ENCODE measurements at regions of chr9 and their contacts with region 1.

Region 1: DNA sequence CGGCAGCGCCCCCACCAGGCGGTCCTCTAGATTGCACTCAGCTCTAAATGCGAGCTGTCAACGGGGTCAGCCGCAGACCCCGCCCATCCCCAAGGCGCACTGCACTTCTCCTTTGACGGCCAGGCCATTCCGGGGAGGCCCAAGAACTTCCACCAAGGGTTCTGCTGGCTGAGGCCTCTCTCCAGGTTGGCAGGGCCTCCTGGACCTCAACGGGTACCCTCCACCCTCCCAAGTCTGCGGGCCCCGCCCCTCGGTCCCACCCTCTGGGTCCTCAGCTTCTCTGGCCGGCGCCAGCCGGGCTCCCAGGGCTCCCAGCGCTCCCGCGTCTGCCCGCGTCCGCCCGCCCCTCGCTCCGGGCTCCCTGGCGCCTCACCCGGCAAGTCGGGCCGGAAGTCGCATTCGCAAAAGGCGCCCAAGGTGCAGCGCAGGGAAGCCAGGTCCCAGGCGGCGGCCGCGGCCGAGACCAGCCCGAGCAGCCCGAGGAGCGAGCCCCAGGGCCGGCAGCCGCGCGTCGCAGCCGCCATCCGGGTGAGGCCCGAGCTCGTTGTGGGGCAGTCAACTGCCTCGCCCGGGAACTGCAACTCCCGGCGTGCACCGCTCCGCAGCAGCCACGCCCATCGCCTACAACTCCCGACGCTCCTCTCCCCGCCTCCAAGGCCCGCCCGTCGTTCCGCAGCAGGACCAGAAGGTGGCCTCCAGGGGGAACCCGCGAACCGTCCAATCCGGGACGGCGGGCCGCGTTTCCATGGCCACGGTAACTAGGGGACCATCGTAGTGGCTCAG is at the start of gene TOR2A:
- DNase-seq: peak; percentile 98
- H3K4me3 Mint-ChIP-seq: peak within 1 kb of the TSS; percentile 79
- H3K27ac Mint-ChIP-seq: peak within 1 kb of the TSS; percentile 82
- H3K4me1 Mint-ChIP-seq: peaks cover 23% of the 10 kb centered on the region
- H3K27me3 Mint-ChIP-seq: no peaks in the 10 kb centered on the region
- total RNA-seq, gene TOR2A: 20.6 to 23.3 TPM

Region 2: DNA sequence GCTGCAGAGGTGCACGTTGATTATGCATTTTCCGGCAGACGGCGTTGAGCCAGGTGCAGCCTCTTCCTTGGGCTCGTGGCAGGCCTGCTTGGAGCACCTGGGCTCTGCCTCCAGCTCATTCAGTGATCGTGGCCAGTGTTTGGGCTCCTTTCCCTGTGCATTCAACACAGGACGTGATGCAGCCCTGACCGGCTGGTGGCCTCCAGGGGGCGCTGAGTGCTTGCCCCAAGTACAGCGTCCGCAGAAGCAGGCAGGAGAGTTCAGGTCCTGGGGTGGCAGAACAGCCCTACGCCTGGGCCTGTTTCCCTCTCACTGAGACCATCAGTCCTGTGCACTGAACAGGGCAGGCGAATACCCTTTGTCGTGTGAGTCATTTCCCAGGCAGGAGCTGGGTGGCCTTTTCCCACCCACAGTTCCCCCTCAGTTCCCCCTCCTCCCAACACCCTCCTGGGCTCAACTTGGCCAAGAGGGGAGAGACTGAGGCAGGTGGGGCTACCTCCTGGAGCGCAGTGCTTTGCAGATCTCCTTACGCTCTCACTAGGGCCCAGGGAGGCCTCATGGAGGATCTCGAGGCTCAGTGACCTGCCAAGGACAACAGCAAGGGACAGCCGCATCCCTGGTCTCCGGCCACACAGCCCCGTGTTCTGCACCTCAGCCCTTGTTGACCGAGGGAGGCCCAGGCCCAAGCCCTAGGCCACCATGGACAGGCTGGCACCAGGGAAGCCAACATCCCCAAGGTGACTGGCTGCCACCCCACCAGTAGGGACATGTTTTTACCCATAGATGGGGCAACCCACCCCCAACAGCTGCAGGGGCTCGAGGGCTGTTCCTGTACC is 230.8 kb before region 1 on chr9:
- CTCF ChIA-PET with region 1: interaction called, 19 read pairs
- POLR2A ChIA-PET with region 1: interaction called, 6 read pairs
- DNase-seq: peak; percentile 85
- H3K4me3 Mint-ChIP-seq: no peak overlapping the region
- H3K27ac Mint-ChIP-seq: peak overlapping the region; percentile 68
- H3K4me1 Mint-ChIP-seq: no peaks in the 10 kb centered on the region
- H3K27me3 Mint-ChIP-seq: no peaks in the 10 kb centered on the region

Region 3: GRCh38 chr9:127611899-127612790 is 122.8 kb before region 1 on chr9 and contains the start of gene STXBP1:
- CTCF ChIA-PET with region 1: interaction called, 18 read pairs
- POLR2A ChIA-PET with region 1: interaction called, 4 read pairs
- DNase-seq: peak; percentile 89
- H3K4me3 Mint-ChIP-seq: peak within 1 kb of the TSS; percentile 84
- H3K27ac Mint-ChIP-seq: no peak within 1 kb of the TSS
- H3K4me1 Mint-ChIP-seq: peaks cover 37% of the 10 kb centered on the region
- H3K27me3 Mint-ChIP-seq: peaks cover 38% of the 10 kb centered on the region
- total RNA-seq, gene STXBP1: 23.2 to 23.4 TPM

Region 4: DNA sequence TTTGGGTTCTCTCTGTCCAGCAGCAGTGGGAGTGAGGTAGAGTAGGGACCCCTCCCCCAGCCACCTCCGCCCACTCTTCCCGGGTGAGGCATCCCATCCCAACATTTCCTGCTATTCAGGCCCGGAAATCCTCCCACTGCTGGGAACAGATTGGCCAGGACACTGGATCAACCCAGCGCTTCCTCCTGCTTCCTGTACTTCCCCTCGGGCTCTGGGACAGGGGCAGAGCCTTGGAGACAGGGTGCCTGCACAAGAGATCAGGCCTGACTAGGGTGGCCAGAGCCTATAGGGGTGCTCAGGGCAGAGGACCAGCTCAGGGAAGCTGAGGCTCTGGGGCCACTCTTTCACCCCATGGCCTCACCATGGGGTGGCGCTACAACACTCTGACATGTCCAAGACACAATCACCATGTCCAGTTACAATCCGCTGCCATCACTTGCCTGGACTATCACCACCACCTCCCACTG is 29.0 kb after region 1 on chr9:
- CTCF ChIA-PET with region 1: interaction called, 11 read pairs
- POLR2A ChIA-PET with region 1: interaction called, 6 read pairs
- DNase-seq: no peak
- H3K4me3 Mint-ChIP-seq: no peak overlapping the region
- H3K27ac Mint-ChIP-seq: peak overlapping the region; percentile 28
- H3K4me1 Mint-ChIP-seq: peaks cover 58% of the 10 kb centered on the region
- H3K27me3 Mint-ChIP-seq: no peaks in the 10 kb centered on the region

Region 5: GRCh38 chr9:127802576-127803443 is 67.9 kb after region 1 on chr9 and contains the start of gene FPGS:
- CTCF ChIA-PET with region 1: interaction called, 10 read pairs
- POLR2A ChIA-PET with region 1: interaction called, 5 read pairs
- DNase-seq: peak; percentile 85
- H3K4me3 Mint-ChIP-seq: peak within 1 kb of the TSS; percentile 93
- H3K27ac Mint-ChIP-seq: peak within 1 kb of the TSS; percentile 92
- H3K4me1 Mint-ChIP-seq: peaks cover 32% of the 10 kb centered on the region
- H3K27me3 Mint-ChIP-seq: no peaks in the 10 kb centered on the region
- total RNA-seq, gene FPGS: 65.6 to 65.8 TPM

Region 6: DNA sequence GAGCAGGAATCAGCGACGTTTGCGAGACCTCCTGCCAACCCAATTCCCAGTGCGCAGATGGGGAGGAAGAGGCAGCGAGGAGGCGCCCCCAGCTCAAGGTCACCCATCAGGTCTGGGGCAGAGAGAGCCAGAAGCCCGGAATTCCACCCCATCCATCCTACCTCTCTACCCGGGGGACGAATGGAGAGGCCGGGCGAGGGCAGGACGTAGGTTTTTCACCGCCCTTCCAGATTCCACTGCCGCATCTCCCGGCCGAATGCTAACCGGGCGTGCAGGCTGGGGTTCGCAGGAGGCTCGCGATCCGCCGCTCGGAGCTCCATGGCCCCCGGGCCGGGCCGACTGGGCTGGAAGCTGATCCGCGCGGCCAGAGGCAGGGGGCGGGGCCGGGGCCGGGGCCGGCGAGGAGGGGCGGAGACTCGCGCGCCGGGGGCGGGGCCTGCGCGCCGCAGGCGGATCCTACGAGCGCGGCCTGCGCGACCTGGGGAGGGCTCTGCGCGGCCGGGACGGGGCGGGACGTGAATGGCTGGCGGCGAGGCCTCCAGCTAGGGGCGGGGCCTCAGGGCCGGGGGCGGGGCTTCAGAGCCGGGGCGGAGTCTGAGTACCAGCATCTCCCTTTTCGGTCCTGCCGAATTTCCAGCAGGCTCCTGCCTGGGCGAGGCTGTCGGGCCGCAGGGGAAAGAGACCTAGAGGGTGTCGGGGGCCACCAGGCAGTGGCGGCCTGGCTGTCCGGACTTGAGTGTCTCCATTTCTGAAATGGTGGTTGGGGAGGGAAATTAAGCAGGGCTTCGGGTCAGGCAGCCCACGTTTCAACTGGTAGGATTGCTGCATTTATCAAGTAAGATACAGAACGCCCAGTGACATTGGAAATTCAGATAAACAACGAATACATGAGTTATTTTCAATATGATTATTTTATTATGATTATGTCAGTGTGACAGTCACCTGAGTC is 182.0 kb after region 1 on chr9 and contains the start of gene ST6GALNAC4:
- CTCF ChIA-PET with region 1: interaction called, 48 read pairs
- POLR2A ChIA-PET with region 1: interaction called, 12 read pairs
- DNase-seq: peak; percentile 96
- H3K4me3 Mint-ChIP-seq: peak within 1 kb of the TSS; percentile 72
- H3K27ac Mint-ChIP-seq: peak within 1 kb of the TSS; percentile 65
- H3K4me1 Mint-ChIP-seq: peaks cover 65% of the 10 kb centered on the region
- H3K27me3 Mint-ChIP-seq: peaks cover under 1% of the 10 kb centered on the region
- total RNA-seq, gene ST6GALNAC4: 19.4 to 21.5 TPM